Posterior vena cava (tissue), 2 donors: ENCODE measurements at regions of chr19 and their contacts with region 1.

Region 1: DNA sequence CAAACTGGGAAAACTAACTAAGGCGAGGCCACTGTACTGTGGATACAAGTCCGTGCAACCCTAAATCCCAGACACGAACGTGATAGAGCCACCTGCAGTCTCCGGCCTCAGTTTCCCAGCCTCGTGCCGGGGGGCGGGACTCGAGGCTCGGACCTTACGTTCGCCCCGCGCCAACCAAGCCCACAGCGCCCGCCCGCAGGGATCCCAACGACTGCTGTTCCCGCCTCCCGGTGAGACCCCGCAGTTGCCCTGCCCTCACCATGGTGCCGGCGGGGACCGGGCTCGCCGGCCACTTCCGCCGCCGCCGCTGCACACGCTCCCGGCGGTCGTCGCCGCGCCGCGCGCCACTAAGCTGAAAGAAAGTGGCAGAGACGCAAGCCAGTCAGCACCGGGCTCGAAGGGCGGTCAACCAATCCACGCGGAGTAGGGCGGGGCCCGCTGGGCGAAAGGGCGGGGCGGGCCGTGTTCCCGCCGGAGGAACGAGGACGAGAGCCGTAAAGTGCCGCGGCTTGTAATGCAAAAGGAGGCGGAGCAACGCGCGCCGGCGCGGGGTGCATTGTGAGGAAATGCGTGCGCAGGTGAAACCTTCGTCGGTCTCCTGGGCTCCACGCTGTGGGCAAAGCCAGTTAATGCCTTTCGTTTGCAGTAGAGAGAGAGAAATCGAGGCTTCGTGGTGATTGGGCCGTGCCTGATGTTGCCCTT is at the start of gene LSM4:
- DNase-seq: peak; percentile 100
- total RNA-seq, gene LSM4: 44.4 to 46.9 TPM

Region 2: DNA sequence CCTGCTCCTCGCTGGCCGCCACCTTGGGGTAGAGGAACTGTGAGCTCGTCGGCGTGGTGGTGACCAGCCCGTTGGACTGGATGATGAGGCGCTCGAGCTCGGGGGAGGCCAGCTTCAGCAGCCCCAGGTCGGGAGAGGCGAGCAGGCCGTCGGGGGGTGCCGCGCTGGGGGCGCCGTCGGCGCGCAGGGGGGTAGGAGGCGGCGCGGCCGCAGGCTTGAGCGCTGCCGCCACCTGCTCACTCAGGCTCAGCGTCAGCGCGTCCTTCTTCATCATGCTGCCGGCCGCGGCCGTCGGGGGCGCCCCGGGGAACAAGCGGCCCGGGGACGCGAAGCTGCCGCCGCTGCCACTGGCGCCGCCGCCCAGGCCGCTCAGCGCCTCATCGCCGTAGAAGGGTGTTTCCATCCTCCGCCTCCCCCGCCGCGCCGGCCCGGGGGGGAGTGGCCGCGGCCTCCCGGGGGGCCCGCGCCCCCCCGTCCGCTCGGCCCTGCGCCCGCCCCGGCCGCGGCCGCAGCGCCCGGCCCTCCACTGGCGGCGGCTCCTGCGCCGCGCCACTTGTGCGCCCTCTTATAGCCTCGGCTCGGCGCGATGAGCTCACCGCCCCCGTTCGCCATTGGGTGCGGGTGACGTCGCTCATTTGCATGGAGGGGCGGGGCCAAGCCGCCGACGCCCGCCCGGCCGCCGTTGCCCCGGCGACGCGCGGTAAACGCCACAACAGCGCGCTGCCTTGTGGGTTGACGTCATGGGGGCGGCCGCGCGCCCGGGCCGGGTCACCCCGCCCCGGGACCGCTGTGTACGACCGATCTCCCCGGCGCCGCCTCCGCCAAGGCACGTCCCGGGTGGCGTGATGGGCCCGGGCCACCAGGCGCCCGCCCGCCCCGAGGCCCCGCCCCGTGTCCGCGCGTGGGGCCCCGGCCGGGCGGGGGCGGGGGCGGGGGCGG is 41.6 kb before region 1 on chr19 and contains the start of gene JUND:
- intact Hi-C with region 1: loop called (anchors 5 kb)
- DNase-seq: peak; percentile 99
- total RNA-seq, gene JUND: 192 to 231 TPM

Region 3: GRCh38 chr19:18287836-18288772 is 34.8 kb before region 1 on chr19:
- intact Hi-C with region 1: loop called (anchors 5 kb)
- DNase-seq: no peak